ENCODE measurements at regions of chr5 and their contacts with region 1.

Region 1: GRCh38 chr5:88729084-88729828 is 153.7 kb downstream of the MEF2C start:
- DNase-seq: peak; percentile 86
- H3K4me3 ChIP-seq: no peak overlapping the region
- H3K27ac ChIP-seq: no peak overlapping the region
- H3K4me1 ChIP-seq: peaks cover 6% of the 10 kb centered on the region
- H3K27me3 ChIP-seq: no peaks in the 10 kb centered on the region
- CTCF ChIP-seq: peak; percentile 49 to 50
- POLR2A ChIP-seq: no peak

Region 2: GRCh38 chr5:87780831-87781760 is 948.2 kb before region 1 on chr5:
- CTCF ChIA-PET with region 1: interaction called, 398 read pairs
- POLR2A ChIA-PET with region 1: no interaction called
- dilution Hi-C with region 1: no loop called
- intact Hi-C with region 1: loop called (anchors 1 kb)
- DNase-seq: peak; percentile 74
- H3K4me3 ChIP-seq: no peak overlapping the region
- H3K27ac ChIP-seq: no peak overlapping the region
- H3K4me1 ChIP-seq: no peaks in the 10 kb centered on the region
- H3K27me3 ChIP-seq: peaks cover 0 to 20% of the 10 kb centered on the region in 2 experiments
- CTCF ChIP-seq: peak; percentile 80 to 82
- POLR2A ChIP-seq: no peak

Region 3: DNA sequence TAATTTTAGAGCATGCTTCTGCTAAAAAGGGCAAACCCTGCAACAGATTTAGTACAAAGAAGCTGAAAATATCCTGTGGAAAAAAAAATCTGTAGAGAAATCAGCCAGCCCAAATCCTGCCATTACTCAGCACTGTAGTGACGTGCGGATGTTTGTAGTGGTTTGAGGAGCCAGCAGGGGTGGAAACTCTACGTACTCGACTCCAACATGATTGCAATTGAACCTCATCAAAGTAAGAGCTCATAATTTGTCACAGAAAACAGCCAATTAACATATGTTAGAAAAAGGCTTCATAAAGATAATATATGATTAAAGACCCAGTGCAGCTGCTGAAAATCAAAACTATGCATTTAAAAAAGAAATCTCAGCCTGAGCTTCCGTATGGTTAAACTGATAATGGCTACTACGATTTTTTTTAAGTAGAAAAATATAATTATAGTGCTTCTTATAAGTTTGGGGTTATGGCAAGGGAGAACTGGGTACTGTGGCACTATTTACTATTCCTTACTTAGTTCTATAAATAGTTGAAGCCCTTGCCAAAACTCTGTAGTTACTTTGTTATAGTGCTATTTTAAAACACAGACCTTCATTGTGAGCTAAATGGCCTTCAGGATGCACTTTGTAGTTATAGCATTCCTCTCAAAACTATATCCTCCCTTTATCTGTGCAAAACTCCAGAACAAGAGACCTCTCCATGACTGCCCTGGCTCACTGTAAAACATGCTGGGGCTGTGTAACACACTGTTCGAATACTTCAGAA is 104.3 kb after region 1 on chr5:
- CTCF ChIA-PET with region 1: interaction called, 21 read pairs
- POLR2A ChIA-PET with region 1: no interaction called
- dilution Hi-C with region 1: no loop called
- intact Hi-C with region 1: no loop called
- DNase-seq: peak; percentile 86
- H3K4me3 ChIP-seq: peak overlapping the region in 1 of 3 experiments; percentile 14
- H3K27ac ChIP-seq: peak overlapping the region; percentile 64
- H3K4me1 ChIP-seq: peaks cover 62% of the 10 kb centered on the region
- H3K27me3 ChIP-seq: no peaks in the 10 kb centered on the region
- CTCF ChIP-seq: no peak
- POLR2A ChIP-seq: no peak

Region 4: GRCh38 chr5:88889189-88890069 is 160.2 kb after region 1 on chr5:
- CTCF ChIA-PET with region 1: interaction called, 164 read pairs
- POLR2A ChIA-PET with region 1: no interaction called
- dilution Hi-C with region 1: no loop called
- intact Hi-C with region 1: no loop called
- DNase-seq: peak; percentile 66
- H3K4me3 ChIP-seq: peak overlapping the region; percentile 47 to 64 (median 52)
- H3K27ac ChIP-seq: peak overlapping the region; percentile 33
- H3K4me1 ChIP-seq: peaks cover 13% of the 10 kb centered on the region
- H3K27me3 ChIP-seq: no peaks in the 10 kb centered on the region
- CTCF ChIP-seq: no peak
- POLR2A ChIP-seq: no peak

Region 5: GRCh38 chr5:89246252-89246651 is 517.0 kb after region 1 on chr5:
- CTCF ChIA-PET with region 1: interaction called, 4 read pairs
- POLR2A ChIA-PET with region 1: no interaction called
- dilution Hi-C with region 1: no loop called
- intact Hi-C with region 1: loop called (anchors 5 kb)
- DNase-seq: peak; percentile 48
- H3K4me3 ChIP-seq: no peak overlapping the region
- H3K27ac ChIP-seq: no peak overlapping the region
- H3K4me1 ChIP-seq: peaks cover 9% of the 10 kb centered on the region
- H3K27me3 ChIP-seq: no peaks in the 10 kb centered on the region
- CTCF ChIP-seq: no peak
- POLR2A ChIP-seq: no peak

Region 6: DNA sequence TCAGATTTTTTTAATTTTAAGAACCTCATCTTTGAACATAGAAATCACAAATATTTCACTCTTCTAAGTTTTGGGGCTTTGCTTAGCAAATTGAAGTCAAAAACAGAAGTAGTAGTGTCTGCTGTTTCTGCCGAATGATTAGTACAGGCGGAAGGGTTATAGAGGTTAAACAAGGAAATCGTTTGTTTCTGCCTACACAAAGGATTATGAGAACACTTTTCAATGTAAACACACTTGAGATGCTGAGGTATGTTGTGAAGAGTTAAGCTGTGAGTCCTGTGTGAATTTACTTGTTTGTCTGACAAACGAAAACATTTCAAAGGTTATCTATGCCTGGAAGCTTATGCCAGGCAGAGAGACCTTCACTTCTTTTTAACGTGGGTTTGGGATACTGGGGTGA is 1455.5 kb after region 1 on chr5:
- CTCF ChIA-PET with region 1: interaction called, 67 read pairs
- POLR2A ChIA-PET with region 1: no interaction called
- dilution Hi-C with region 1: no loop called
- intact Hi-C with region 1: loop called (anchors 1 kb)
- DNase-seq: no peak
- H3K4me3 ChIP-seq: no peak overlapping the region
- H3K27ac ChIP-seq: no peak overlapping the region
- H3K4me1 ChIP-seq: no peaks in the 10 kb centered on the region
- H3K27me3 ChIP-seq: no peaks in the 10 kb centered on the region
- CTCF ChIP-seq: no peak
- POLR2A ChIP-seq: no peak

Measured in endothelial cell of umbilical vein (primary cell).